A673 (cell line): ENCODE measurements at regions of chr2 and their contacts with region 1.

Region 1: GRCh38 chr2:204325468-204325867 is 219.8 kb upstream of the PARD3B start:
- DNase-seq: peak; percentile 85
- H3K4me3 ChIP-seq: no peak overlapping the region
- H3K27ac ChIP-seq: no peak overlapping the region
- H3K4me1 ChIP-seq: peaks cover 22% of the 10 kb centered on the region
- H3K27me3 ChIP-seq: no peaks in the 10 kb centered on the region
- CTCF ChIP-seq: peak; percentile 86

Region 2: GRCh38 chr2:203688798-203689197 is 636.7 kb before region 1 on chr2:
- CTCF ChIA-PET with region 1: no interaction called
- POLR2A ChIA-PET with region 1: no interaction called
- intact Hi-C with region 1: no loop called
- DNase-seq: no peak
- H3K4me3 ChIP-seq: no peak overlapping the region
- H3K27ac ChIP-seq: no peak overlapping the region
- H3K4me1 ChIP-seq: no peaks in the 10 kb centered on the region
- H3K27me3 ChIP-seq: no peaks in the 10 kb centered on the region
- CTCF ChIP-seq: no peak

Region 3: DNA sequence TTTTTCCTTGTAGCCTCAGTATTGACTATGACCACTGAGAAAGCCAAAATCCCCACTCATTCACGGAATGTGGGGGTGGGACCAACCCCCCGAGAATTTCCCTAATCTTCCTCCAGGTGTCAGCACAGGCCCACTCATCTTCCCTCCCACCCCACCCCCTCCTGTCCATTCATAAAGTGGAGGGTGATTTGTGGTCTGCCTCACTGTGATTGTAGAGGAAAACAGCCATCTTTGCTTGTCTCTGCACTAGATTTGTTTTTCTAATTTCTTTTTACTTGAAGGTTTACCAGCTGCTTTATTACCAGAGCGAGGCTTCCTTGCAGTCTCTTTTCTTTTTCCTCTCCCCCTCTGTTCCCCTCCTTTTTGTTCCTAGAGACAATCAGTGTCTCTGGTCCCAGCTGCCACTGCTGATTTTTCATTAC is 217.1 kb before region 1 on chr2:
- CTCF ChIA-PET with region 1: no interaction called
- POLR2A ChIA-PET with region 1: no interaction called
- intact Hi-C with region 1: loop called (anchors 10 kb)
- DNase-seq: peak; percentile 68
- H3K4me3 ChIP-seq: no peak overlapping the region
- H3K27ac ChIP-seq: no peak overlapping the region
- H3K4me1 ChIP-seq: peaks cover 10% of the 10 kb centered on the region
- H3K27me3 ChIP-seq: no peaks in the 10 kb centered on the region
- CTCF ChIP-seq: peak; percentile 56

Region 4: GRCh38 chr2:204260162-204260877 is 65.1 kb before region 1 on chr2:
- CTCF ChIA-PET with region 1: interaction called, 3 read pairs
- POLR2A ChIA-PET with region 1: no interaction called
- intact Hi-C with region 1: loop called (anchors 1 kb)
- DNase-seq: peak; percentile 91
- H3K4me3 ChIP-seq: no peak overlapping the region
- H3K27ac ChIP-seq: no peak overlapping the region
- H3K4me1 ChIP-seq: peaks cover 39% of the 10 kb centered on the region
- H3K27me3 ChIP-seq: no peaks in the 10 kb centered on the region
- CTCF ChIP-seq: peak; percentile 90

Region 5: GRCh38 chr2:204691911-204692510 is 366.5 kb after region 1 on chr2:
- CTCF ChIA-PET with region 1: no interaction called
- POLR2A ChIA-PET with region 1: no interaction called
- intact Hi-C with region 1: loop called (anchors 2 kb)
- DNase-seq: peak; percentile 78
- H3K4me3 ChIP-seq: no peak overlapping the region
- H3K27ac ChIP-seq: no peak overlapping the region
- H3K4me1 ChIP-seq: peaks cover 10% of the 10 kb centered on the region
- H3K27me3 ChIP-seq: no peaks in the 10 kb centered on the region
- CTCF ChIP-seq: peak; percentile 80

Region 6: DNA sequence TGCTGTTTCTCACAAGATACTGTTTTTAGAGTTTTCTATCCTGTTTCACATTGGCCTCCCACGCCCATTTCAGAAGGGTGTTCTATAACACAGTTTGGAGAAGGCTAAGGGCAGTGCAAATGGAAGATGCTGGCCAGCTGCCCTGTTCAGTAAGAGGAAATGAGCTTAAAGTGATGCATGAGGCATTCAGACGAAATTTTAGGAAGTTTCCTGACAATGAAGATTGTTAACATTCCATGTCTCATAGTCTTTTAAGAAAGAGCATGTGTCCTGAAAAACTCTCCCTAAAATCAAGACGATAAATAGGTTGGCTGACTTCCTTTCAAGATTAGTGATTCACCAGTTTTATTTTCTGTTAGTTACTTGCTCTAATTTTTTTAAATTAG is 872.7 kb after region 1 on chr2:
- CTCF ChIA-PET with region 1: no interaction called
- POLR2A ChIA-PET with region 1: no interaction called
- intact Hi-C with region 1: loop called (anchors 10 kb)
- DNase-seq: peak; percentile 89
- H3K4me3 ChIP-seq: no peak overlapping the region
- H3K27ac ChIP-seq: no peak overlapping the region
- H3K4me1 ChIP-seq: peaks cover 12% of the 10 kb centered on the region
- H3K27me3 ChIP-seq: no peaks in the 10 kb centered on the region
- CTCF ChIP-seq: no peak

Region 7: GRCh38 chr2:205766779-205767359 is 1441.4 kb after region 1 on chr2:
- CTCF ChIA-PET with region 1: no interaction called
- POLR2A ChIA-PET with region 1: no interaction called
- intact Hi-C with region 1: loop called (anchors 5 kb)
- DNase-seq: peak; percentile 73
- H3K4me3 ChIP-seq: no peak overlapping the region
- H3K27ac ChIP-seq: no peak overlapping the region
- H3K4me1 ChIP-seq: peaks cover 17% of the 10 kb centered on the region
- H3K27me3 ChIP-seq: no peaks in the 10 kb centered on the region
- CTCF ChIP-seq: peak; percentile 88

Region 8: DNA sequence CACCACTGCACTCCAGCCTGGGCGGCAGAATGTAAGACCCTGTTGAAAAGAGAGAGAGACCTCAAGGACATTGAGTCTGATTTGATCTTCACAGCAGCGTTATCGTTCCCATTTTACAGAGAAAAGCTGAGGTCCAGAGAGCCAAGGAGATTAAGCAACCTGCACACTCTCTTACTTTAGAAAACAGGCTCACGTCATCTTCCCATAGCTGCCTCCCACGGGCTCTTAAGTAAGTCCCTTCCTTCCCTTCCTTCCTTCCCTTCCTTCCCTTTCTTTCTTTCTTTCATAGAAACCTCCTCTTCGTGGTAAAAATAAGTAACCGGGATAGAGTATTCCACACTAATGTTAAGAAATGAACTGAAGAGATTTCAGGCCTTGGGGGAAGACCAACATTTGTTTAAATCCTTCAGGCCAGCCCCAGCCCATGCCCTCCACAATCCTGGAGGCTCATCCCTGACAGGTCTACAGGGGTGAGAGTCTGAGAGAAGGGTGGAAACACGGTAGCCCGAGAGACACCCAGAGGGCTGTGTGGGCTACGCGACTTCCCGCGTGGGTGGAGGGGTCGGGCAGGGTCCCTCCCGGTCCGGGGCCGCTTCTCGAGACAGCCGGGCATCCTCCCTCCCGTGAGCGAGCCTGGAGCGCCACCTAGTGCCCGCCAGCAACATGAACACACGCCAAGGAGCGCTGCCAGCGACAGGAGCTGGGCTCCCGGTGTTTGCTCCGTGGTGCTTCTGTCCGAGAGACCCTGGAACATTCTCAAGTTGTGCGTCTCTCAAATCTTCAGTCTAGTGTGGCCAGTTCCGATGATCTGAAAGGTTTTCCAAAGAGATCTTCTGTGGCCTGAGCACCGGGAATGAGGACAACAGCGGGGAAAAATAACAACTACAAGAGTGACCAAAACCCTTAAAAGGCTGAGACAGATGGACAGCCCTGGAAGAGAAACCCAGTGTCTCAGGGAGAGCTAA is 1600.2 kb after region 1 on chr2:
- CTCF ChIA-PET with region 1: no interaction called
- POLR2A ChIA-PET with region 1: no interaction called
- intact Hi-C with region 1: loop called (anchors 5 kb)
- DNase-seq: peak; percentile 79
- H3K4me3 ChIP-seq: peak overlapping the region; percentile 17
- H3K27ac ChIP-seq: no peak overlapping the region
- H3K4me1 ChIP-seq: peaks cover 5% of the 10 kb centered on the region
- H3K27me3 ChIP-seq: no peaks in the 10 kb centered on the region
- CTCF ChIP-seq: peak; percentile 95